Activated naive CD4-positive, alpha-beta T cell treated with anti-CD3 and anti-CD28 coated beads for 36 hours (primary cell): ENCODE measurements at regions of chr11 and their contacts with region 1.

Region 1: GRCh38 chr11:65329944-65330403 is 3.7 kb upstream of the DPF2 start:
- DNase-seq: peak; percentile 96
- H3K4me3 Mint-ChIP-seq: no peak overlapping the region
- H3K27ac Mint-ChIP-seq: no peak overlapping the region
- H3K4me1 Mint-ChIP-seq: peaks cover 11% of the 10 kb centered on the region
- H3K27me3 Mint-ChIP-seq: no peaks in the 10 kb centered on the region

Region 2: GRCh38 chr11:65204646-65205601 is 125.0 kb before region 1 on chr11:
- CTCF ChIA-PET with region 1: interaction called, 13 read pairs
- intact Hi-C with region 1: loop called (anchors 5 kb)
- DNase-seq: peak; percentile 54
- H3K4me3 Mint-ChIP-seq: no peak overlapping the region
- H3K27ac Mint-ChIP-seq: no peak overlapping the region
- H3K4me1 Mint-ChIP-seq: no peaks in the 10 kb centered on the region
- H3K27me3 Mint-ChIP-seq: no peaks in the 10 kb centered on the region

Region 3: DNA sequence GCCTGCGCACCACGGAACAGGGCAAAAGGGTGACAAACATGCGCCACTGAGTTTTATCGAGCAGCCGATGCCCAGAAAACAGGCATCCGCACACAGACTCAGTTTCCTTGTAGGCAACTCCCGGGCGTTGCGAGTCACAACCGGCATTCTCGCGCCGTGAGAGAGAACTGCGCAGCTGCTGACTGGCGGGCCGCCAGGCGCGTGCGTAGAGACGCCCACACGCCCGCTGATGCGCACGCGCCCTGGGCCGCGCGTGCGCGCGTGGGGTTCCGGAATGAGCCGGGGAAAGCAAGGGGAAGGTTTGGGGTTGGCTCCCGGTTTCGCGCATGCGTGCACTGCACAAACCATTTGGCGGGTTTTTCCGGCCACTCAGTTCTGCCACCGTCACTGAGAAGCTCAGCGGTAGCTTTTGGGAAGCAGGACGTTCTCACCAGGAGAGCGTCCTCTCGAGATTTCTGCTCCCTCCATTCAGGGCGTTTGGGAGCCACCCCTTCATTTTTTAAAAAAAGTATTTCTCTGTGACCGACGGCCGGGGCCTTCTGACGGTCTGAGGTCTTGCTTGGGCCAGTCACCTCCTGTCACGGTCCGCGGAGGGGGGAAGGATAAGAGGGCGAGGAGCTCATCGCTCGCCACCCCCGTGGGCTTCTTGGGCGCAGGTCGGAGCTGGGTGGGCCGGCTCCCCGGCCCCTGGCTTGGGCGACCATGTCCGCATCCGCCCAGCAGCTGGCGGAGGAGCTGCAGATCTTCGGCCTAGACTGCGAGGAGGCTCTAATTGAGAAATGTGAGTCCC is 68.2 kb before region 1 on chr11 and contains the start of gene POLA2:
- CTCF ChIA-PET with region 1: interaction called, 15 read pairs
- intact Hi-C with region 1: loop called (anchors 5 kb)
- DNase-seq: peak; percentile 98
- H3K4me3 Mint-ChIP-seq: peak within 1 kb of the TSS; percentile 93
- H3K27ac Mint-ChIP-seq: peak within 1 kb of the TSS; percentile 94
- H3K4me1 Mint-ChIP-seq: peaks cover 44% of the 10 kb centered on the region
- H3K27me3 Mint-ChIP-seq: no peaks in the 10 kb centered on the region
- total RNA-seq, gene POLA2: 65.1 to 67.0 TPM

Region 4: GRCh38 chr11:65314501-65315203 is 15.3 kb before region 1 on chr11 and contains the start of gene CDC42EP2:
- CTCF ChIA-PET with region 1: interaction called, 161 read pairs
- intact Hi-C with region 1: loop called (anchors 1 kb)
- DNase-seq: peak; percentile 72
- H3K4me3 Mint-ChIP-seq: peak within 1 kb of the TSS; percentile 74
- H3K27ac Mint-ChIP-seq: no peak within 1 kb of the TSS
- H3K4me1 Mint-ChIP-seq: peaks cover 5% of the 10 kb centered on the region
- H3K27me3 Mint-ChIP-seq: peaks cover 8% of the 10 kb centered on the region
- total RNA-seq, gene CDC42EP2: 0.57 to 1.5 TPM

Region 5: DNA sequence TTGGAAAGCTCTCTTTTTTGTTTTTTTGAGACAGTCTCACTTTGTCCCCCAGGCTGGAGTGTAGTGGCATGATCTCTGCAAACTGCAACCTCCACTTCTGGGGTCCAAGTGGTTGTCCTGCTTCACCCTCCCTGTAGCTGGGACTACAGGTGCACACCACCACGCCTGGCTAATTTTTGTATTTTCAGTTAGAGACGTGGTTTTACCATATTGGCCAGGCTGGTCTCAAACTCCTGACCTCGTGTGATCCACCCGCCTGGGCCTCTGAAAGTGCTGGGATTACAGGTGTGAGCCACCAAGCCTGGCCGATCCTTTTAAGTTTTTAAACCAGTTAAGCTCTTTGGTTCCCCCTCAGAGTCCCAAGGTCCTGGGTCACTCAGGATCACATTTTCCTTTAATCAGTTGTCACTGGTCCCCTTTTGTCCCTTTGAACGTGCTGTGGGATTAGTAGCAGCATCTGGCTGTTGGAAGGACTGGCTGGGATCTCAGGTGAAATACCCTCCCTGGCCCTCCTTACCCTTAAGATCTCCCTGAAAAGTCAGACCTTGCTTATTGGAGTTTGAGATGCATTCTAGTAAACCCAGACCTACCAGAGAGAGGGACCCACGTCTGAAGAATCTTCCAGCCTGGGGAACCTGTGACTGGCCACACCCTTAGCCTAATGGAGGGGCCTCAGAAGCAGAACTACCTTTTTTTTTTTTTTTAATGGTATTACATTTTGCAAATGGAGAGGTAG is 177.0 kb after region 1 on chr11:
- CTCF ChIA-PET with region 1: interaction called, 11 read pairs
- intact Hi-C with region 1: no loop called
- DNase-seq: peak; percentile 80
- H3K4me3 Mint-ChIP-seq: no peak overlapping the region
- H3K27ac Mint-ChIP-seq: no peak overlapping the region
- H3K4me1 Mint-ChIP-seq: peaks cover 40% of the 10 kb centered on the region
- H3K27me3 Mint-ChIP-seq: no peaks in the 10 kb centered on the region